H1 (cell line): ENCODE measurements at regions of chr10 and their contacts with region 1.

Region 1: DNA sequence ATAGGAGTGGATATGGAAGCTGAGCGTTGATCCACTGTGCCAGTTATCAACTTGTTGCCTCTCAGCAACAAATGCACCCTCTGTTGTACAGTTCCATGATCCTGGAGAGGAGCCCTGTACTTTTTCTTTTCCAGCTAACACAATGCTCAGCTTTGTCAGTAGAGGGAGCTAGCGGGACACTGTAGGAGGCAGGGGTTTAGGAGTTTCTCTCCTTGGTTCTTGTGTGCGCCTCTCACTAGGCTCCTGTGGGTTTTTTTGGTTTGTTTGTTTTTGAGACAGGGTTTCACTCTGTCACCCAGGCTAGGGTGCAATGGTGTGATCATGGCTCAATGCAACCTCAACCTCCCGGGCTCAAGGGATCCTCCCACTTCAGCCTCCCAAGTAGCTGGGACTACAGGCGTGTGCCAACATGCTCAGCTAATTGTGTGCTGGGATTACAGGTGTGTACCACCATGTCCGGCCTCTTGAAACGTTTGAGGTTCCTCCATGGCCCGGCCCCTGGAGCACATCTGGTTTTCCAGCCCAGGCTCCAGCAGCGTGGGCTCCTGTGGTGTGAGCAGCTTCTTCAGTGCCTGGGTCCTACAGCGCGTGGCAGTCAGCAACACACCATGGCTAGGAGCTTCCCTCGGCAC is 12.0 kb upstream of the MARVELD1 start:
- DNase-seq: peak in 1 of 2 experiments; percentile 66
- H3K4me3 ChIP-seq: no peak overlapping the region
- H3K27ac ChIP-seq: no peak overlapping the region
- H3K4me1 ChIP-seq: peaks cover 0 to 2% (median 0%) of the 10 kb centered on the region in 4 experiments; a peak in 2 of 7 replicates
- H3K27me3 ChIP-seq: no peaks in the 10 kb centered on the region
- CTCF ChIP-seq: peak; percentile 51 to 94 (median 93)
- EP300 ChIP-seq: no peak
- POLR2A ChIP-seq: no peak
- RAD21 ChIP-seq: peak; percentile 92 to 94

Region 2: GRCh38 chr10:97676770-97677581 is 24.6 kb before region 1 on chr10:
- CTCF ChIA-PET with region 1: interaction called, 111 read pairs
- POLR2A ChIA-PET with region 1: interaction called, 7 read pairs
- DNase-seq: peak in 1 of 2 experiments; percentile 55
- H3K4me3 ChIP-seq: no peak overlapping the region
- H3K27ac ChIP-seq: no peak overlapping the region
- H3K4me1 ChIP-seq: no peaks in the 10 kb centered on the region
- H3K27me3 ChIP-seq: no peaks in the 10 kb centered on the region
- CTCF ChIP-seq: peak; percentile 75 to 85 (median 77)
- EP300 ChIP-seq: no peak
- POLR2A ChIP-seq: peak in 1 of 2 experiments; percentile 47; a peak in 1 of 3 replicates
- RAD21 ChIP-seq: peak; percentile 84 to 85

Region 3: DNA sequence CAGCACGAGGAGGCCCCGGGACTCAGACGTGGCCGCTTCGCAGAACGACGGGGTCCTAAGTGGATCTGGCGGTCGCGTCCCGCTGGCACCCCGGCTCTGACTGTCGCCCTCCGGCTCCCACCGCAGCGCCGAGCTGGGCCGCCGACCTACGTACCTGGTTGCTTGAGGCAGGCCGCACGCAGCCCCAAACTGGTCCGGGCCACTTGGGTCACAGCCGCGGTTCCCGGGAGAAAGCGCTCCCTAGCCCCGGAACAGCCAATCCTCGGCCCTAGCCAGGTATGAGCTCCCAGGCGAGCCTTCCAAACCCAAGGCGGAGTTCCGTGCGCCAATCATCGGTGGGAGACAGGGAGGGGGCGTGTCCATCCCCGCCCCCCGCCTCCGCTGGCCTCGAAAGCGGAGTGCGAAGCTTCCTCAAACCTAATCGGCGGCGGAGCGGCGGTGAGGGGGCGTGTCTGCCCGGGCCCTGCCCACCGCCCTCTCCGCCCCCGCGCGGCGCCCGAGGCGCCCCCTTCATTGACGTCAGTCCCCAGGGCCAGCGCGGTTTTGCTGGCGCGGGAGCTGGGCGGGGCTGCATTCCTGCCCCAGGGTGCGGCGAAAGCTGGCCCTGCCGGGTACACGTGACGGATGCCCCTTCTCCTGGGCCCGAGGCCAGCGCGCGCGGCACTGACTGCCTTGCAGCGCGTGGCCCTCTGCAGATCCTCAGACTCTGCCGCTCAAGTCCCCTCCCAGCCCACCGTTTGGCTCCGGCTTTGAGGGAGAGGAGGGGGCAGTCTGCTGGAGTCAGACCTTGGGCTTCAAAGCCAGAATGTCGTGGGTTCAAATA is 14.4 kb before region 1 on chr10 and contains the start of gene AVPI1:
- CTCF ChIA-PET with region 1: interaction called, 50 read pairs
- POLR2A ChIA-PET with region 1: interaction called, 15 read pairs
- DNase-seq: peak; percentile 96 to 98
- H3K4me3 ChIP-seq: peak within 1 kb of the TSS; percentile 60 to 74 (median 72)
- H3K27ac ChIP-seq: peak within 1 kb of the TSS; percentile 62
- H3K4me1 ChIP-seq: peaks cover 0 to 16% (median 5%) of the 10 kb centered on the region in 4 experiments; a peak in 4 of 7 replicates
- H3K27me3 ChIP-seq: peaks cover 0 to 7% (median 0%) of the 10 kb centered on the region in 4 experiments; a peak in 2 of 7 replicates
- CTCF ChIP-seq: no peak
- EP300 ChIP-seq: peak in 1 of 2 experiments; percentile 5; a peak in 1 of 3 replicates
- POLR2A ChIP-seq: peak; percentile 62 to 89
- RAD21 ChIP-seq: no peak
- total RNA-seq, gene AVPI1: 7.8 and 9.0 TPM in 2 replicates

Region 4: GRCh38 chr10:97714048-97714371 is 12.5 kb after region 1 on chr10:
- CTCF ChIA-PET with region 1: interaction called, 156 read pairs
- POLR2A ChIA-PET with region 1: interaction called, 23 read pairs
- DNase-seq: peak in 1 of 2 experiments; percentile 76
- H3K4me3 ChIP-seq: peak overlapping the region; percentile 47 to 78 (median 66)
- H3K27ac ChIP-seq: peak overlapping the region; percentile 77
- H3K4me1 ChIP-seq: peaks cover 5 to 18% (median 11%) of the 10 kb centered on the region in 4 experiments
- H3K27me3 ChIP-seq: no peaks in the 10 kb centered on the region
- CTCF ChIP-seq: peak in 2 of 3 experiments; percentile 22 to 41; a peak in 2 of 4 replicates
- EP300 ChIP-seq: no peak
- POLR2A ChIP-seq: peak; percentile 39 to 84
- RAD21 ChIP-seq: no peak

Region 5: DNA sequence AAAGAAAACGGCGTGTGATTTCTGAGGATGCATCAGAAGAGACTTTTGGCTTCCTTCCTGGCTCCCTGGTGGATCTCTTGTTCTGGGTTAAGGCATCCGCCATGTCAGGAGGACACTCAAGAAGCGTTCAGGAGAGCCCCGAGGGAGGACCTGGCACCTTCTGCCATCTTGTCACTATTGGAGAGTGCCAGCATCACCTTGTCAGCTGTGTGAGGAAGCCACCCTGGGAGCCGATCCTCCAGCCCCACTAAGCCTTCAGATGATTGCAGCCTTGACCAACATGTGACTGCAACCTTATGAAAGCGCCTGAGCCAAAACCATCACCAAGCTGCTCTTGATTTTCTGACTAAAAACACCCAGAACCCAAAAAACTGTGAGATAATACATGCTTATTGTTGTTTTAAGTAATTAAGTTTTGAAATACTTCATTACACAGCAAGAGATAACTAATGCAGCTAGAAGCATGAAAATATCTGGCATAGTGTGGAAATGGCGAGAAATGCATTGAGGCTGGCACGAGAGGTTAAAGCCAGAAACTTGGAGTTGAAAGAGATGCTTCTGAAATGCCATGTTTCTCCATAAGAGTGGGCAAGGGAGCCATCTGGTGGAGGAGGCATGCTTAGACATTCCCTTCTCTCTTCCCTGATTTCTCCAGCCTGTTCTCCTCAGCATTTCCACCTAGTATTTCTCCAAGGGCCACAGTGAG is 29.9 kb after region 1 on chr10:
- CTCF ChIA-PET with region 1: interaction called, 773 read pairs
- POLR2A ChIA-PET with region 1: interaction called, 4 read pairs
- DNase-seq: peak in 1 of 2 experiments; percentile 72
- H3K4me3 ChIP-seq: no peak overlapping the region
- H3K27ac ChIP-seq: no peak overlapping the region
- H3K4me1 ChIP-seq: no peaks in the 10 kb centered on the region
- H3K27me3 ChIP-seq: peaks cover 11 to 19% (median 14%) of the 10 kb centered on the region in 4 experiments
- CTCF ChIP-seq: peak; percentile 32 to 94 (median 94)
- EP300 ChIP-seq: no peak
- POLR2A ChIP-seq: no peak
- RAD21 ChIP-seq: peak; percentile 98 to 99

Region 6: DNA sequence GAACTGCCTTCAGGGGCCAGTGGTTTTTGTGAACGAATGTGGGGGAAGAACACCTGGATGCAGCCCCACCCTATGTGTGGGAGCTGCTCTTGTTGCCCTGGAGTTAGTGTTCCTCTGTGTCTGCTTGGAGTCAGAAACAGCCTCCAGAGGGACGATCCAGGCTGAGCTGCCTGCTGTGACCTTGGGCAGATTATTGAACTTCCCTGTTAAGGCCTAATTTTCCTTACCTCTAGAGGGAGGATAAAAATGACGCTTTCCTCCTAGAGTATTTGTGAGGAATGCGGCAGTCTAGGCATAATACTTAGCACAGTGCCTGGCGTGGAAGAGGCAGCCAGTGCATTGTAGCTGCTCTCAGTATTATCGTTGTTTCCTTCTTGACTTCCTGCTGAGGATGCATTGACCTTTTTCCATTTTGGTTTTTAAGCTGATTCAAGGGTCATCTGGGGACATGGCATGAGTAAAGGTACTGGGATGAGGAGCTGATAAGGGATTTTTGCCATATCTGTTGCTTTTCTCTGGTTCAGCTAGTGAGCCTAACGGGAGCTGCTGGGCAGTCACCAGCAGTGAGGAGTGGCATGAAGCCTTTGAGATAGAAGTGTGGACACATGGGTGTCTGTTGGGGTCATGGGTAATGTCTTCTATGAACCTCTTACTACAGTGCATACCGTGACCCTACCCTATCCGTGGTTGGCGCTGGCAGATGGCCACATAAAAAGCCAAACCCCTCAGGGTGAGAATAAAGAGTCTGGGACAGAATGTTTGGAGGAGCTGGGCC is 41.8 kb after region 1 on chr10:
- CTCF ChIA-PET with region 1: interaction called, 13 read pairs
- POLR2A ChIA-PET with region 1: interaction called, 3 read pairs
- DNase-seq: no peak
- H3K4me3 ChIP-seq: no peak overlapping the region
- H3K27ac ChIP-seq: no peak overlapping the region
- H3K4me1 ChIP-seq: no peaks in the 10 kb centered on the region; a peak in 1 of 7 replicates
- H3K27me3 ChIP-seq: no peaks in the 10 kb centered on the region
- CTCF ChIP-seq: no peak
- EP300 ChIP-seq: no peak
- POLR2A ChIP-seq: no peak
- RAD21 ChIP-seq: no peak

Region 7: DNA sequence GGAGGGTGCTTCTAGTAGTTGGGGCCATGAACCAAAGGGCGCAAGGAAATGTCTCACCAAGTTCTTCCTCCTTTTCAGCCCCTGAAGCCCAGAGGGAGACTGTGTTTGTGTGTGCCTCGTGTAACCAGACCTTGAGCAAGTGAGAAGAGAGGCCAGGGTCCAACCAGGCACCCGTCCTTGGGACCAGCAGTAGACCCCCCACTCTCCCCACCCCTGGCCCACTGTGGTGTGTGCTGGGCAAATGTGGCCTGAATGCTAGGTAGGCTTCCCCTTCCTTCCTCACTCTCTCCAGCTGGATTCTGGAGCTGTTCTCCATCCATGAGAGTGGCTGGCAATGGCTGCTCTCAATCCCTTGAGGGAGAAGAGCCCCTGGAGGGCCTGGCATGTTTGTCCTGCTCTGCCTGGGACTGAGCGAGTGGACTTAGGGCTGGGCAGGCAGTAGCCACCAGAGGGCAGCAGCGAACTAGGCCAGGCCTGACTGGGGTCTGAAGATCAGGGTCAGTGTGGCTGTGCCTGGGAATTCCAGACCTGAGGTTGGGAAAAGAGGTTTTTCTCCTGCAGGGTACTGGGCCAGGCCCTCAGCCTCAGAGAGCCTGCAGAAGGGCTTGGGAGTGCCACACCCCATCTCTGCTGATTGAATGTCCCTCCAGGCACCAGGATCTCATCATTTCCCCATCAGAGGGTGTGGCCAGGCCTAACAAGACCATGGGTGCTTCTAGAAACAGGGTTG is 57.8 kb after region 1 on chr10:
- CTCF ChIA-PET with region 1: interaction called, 11 read pairs
- POLR2A ChIA-PET with region 1: no interaction called
- DNase-seq: peak; percentile 76 to 95
- H3K4me3 ChIP-seq: no peak overlapping the region
- H3K27ac ChIP-seq: no peak overlapping the region
- H3K4me1 ChIP-seq: peaks cover 0 to 14% (median 6%) of the 10 kb centered on the region in 4 experiments; a peak in 6 of 7 replicates
- H3K27me3 ChIP-seq: no peaks in the 10 kb centered on the region
- CTCF ChIP-seq: peak; percentile 96 to 99 (median 99)
- EP300 ChIP-seq: no peak
- POLR2A ChIP-seq: no peak
- RAD21 ChIP-seq: peak; percentile 95 to 97